GM12878 (cell line): ENCODE measurements at regions of chr22 and their contacts with region 1.

Region 1: DNA sequence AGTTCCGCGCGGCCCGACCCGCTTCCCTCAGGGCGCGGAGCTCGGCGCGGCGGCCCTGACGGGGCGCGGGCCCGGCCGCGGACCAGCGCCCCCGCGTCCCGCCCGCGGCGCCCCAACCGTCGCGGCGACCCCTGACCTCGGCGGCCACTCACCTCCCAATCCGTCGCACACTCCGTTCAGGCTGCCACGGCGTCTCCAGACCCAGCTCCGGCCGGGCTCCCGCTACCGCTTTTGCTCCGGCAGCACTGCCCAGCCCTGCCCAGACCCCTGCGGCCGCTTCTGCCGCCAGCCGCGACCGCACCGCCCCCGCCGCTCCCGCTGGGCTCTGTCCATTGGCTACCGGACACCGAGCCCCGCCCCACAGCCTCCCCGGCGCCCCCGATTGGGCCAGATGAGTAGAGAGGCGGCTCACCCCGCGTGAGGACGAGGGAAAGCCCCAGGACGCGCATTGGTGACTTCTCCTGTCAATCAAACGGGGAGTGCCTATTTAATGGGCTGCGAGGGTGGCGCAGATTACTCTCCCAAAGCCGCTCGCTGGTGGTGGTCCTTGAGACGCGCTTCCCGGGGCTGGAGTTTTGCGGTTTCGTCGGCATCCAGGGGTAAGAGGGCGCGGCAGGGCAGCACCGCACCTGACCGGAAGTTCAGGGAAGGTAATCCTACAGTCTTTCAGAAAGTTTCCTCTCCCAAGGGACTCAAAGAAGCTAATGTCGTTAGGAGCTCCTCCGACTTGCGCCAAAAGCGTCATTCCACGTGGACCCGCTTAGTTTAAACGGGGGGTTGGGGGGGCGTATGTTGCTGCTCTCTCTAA is at the start of gene PACSIN2:
- DNase-seq: peak; percentile 82
- ATAC-seq: peak; percentile 98
- H3K4me3 ChIP-seq: peak within 1 kb of the TSS; percentile 97
- H3K27ac ChIP-seq: peak within 1 kb of the TSS; percentile 68
- H3K4me1 ChIP-seq: no peaks in the 10 kb centered on the region
- H3K27me3 ChIP-seq: no peaks in the 10 kb centered on the region
- CTCF ChIP-seq: 0 out of 6 replicates have a peak, but pooled peaks of 1 of the 3 experiments have one; percentile 0
- EP300 ChIP-seq: no peak
- POLR2A ChIP-seq: peak; percentile 99
- RAD21 ChIP-seq: no peak
- polyA plus RNA-seq, gene PACSIN2: 0.93 to 1.6 TPM

Region 2: GRCh38 chr22:41910050-41911000 is 1104.7 kb before region 1 on chr22:
- CTCF ChIA-PET with region 1: no interaction called
- POLR2A ChIA-PET with region 1: no interaction called
- RAD21 ChIA-PET with region 1: no interaction called
- SMC1A ChIA-PET with region 1: no interaction called
- in situ Hi-C with region 1: no loop called
- intact Hi-C with region 1: no loop called
- DNase-seq: no peak
- ATAC-seq: no peak
- H3K4me3 ChIP-seq: peak overlapping the region; percentile 32; the same call in 1 of the 2 replicates
- H3K27ac ChIP-seq: no peak overlapping the region
- H3K4me1 ChIP-seq: peaks cover 15% of the 10 kb centered on the region
- H3K27me3 ChIP-seq: peaks cover 5 to 12% of the 10 kb centered on the region in 2 experiments; a peak in 3 of 4 replicates
- CTCF ChIP-seq: no peak
- EP300 ChIP-seq: no peak
- POLR2A ChIP-seq: no peak
- RAD21 ChIP-seq: no peak

Region 3: DNA sequence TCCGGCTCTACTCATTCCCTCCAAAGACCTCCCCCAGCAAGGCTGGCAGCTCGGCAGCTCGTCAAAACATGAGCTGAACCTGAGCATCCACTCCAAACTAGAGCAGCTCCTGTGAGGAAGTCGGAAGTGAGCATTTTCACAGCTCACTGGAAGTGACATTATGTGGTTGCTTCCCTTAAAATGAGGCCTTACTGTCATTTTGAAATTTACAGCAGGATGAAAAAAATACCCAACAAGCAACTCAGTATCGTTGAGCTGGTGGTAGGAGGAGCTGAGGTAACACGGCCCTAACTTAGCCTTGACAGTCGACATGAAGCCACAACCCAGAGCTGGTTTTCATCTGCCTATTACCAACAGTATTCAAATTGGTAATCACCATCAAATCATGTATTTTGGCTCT is 120.0 kb before region 1 on chr22:
- CTCF ChIA-PET with region 1: no interaction called
- POLR2A ChIA-PET with region 1: interaction called, 4 read pairs
- RAD21 ChIA-PET with region 1: interaction called, 15 read pairs
- SMC1A ChIA-PET with region 1: no interaction called
- in situ Hi-C with region 1: no loop called
- intact Hi-C with region 1: no loop called
- DNase-seq: peak; percentile 76
- ATAC-seq: peak; percentile 81
- H3K4me3 ChIP-seq: no peak overlapping the region
- H3K27ac ChIP-seq: peak overlapping the region; percentile 69
- H3K4me1 ChIP-seq: peaks cover 68% of the 10 kb centered on the region
- H3K27me3 ChIP-seq: no peaks in the 10 kb centered on the region
- CTCF ChIP-seq: no peak
- EP300 ChIP-seq: no peak
- POLR2A ChIP-seq: no peak
- RAD21 ChIP-seq: no peak

Region 4: GRCh38 chr22:43001271-43002201 is 13.5 kb before region 1 on chr22:
- CTCF ChIA-PET with region 1: interaction called, 15 read pairs
- POLR2A ChIA-PET with region 1: interaction called, 63 read pairs
- RAD21 ChIA-PET with region 1: interaction called, 17 read pairs
- SMC1A ChIA-PET with region 1: interaction called, 62 read pairs
- in situ Hi-C with region 1: no loop called
- intact Hi-C with region 1: no loop called
- DNase-seq: no peak
- ATAC-seq: peak; percentile 67
- H3K4me3 ChIP-seq: peak overlapping the region; percentile 22
- H3K27ac ChIP-seq: peak overlapping the region; percentile 77
- H3K4me1 ChIP-seq: peaks cover 73% of the 10 kb centered on the region
- H3K27me3 ChIP-seq: no peaks in the 10 kb centered on the region
- CTCF ChIP-seq: no peak
- EP300 ChIP-seq: no peak
- POLR2A ChIP-seq: no peak
- RAD21 ChIP-seq: no peak